ENCODE measurements at regions of chr6 and their contacts with region 1.

Region 1: DNA sequence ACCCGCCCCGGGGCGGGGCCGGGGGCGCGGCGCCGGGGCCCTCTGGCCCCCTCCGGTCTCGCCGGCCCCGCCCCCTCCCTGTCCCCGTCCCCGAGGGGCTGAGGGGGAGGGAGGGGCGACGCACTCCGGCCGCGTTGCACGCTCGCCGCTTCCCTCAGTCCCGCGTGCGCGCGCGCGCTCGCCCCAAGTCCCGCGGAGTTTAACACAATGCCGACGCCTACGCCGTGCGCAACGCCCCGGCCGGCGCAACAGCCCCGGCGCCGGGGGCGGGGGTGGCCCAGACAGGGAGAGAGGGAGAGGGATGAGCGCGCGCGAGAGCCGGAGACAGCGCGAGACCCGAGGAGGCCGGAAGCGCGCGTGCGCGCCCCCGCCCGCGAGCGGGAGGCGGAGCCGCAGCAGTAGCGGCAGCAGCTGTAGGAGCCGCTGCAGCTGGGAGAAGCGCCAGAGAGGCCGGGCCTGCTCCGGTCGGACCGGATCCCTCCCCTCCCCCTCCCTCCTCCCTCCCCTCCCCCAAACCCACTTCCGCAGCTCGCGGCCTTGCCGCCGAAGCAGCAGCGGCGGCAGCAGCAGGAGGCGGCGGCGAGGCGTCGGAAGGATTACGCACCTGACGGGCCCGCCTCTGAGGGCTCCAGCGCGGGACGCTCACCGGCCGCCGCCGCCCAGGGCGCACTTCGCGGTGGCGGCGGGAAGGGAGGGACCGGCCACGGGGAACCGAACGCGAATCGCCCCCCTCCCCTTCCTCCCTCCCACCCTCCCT is 905 bp downstream of the ZBTB2 start:
- DNase-seq: peak; percentile 99
- H3K4me3 Mint-ChIP-seq: peak overlapping the region; percentile 88
- H3K27ac Mint-ChIP-seq: peak overlapping the region; percentile 74
- H3K4me1 Mint-ChIP-seq: peaks cover 25% of the 10 kb centered on the region
- H3K27me3 Mint-ChIP-seq: no peaks in the 10 kb centered on the region
- CTCF ChIP-seq: no peak

Region 2: GRCh38 chr6:151357758-151358436 is 32.6 kb before region 1 on chr6:
- CTCF ChIA-PET with region 1: no interaction called
- POLR2A ChIA-PET with region 1: interaction called, 10 read pairs
- intact Hi-C with region 1: no loop called
- DNase-seq: peak; percentile 30
- H3K4me3 Mint-ChIP-seq: no peak overlapping the region
- H3K27ac Mint-ChIP-seq: no peak overlapping the region
- H3K4me1 Mint-ChIP-seq: peaks cover 10% of the 10 kb centered on the region
- H3K27me3 Mint-ChIP-seq: no peaks in the 10 kb centered on the region
- CTCF ChIP-seq: no peak

Region 3: GRCh38 chr6:151374036-151374683 is 16.3 kb before region 1 on chr6:
- CTCF ChIA-PET with region 1: interaction called, 5 read pairs
- POLR2A ChIA-PET with region 1: interaction called, 70 read pairs
- intact Hi-C with region 1: no loop called
- DNase-seq: no peak
- H3K4me3 Mint-ChIP-seq: peak overlapping the region; percentile 34
- H3K27ac Mint-ChIP-seq: peak overlapping the region; percentile 92
- H3K4me1 Mint-ChIP-seq: peaks cover 9% of the 10 kb centered on the region
- H3K27me3 Mint-ChIP-seq: no peaks in the 10 kb centered on the region
- CTCF ChIP-seq: no peak

Region 4: DNA sequence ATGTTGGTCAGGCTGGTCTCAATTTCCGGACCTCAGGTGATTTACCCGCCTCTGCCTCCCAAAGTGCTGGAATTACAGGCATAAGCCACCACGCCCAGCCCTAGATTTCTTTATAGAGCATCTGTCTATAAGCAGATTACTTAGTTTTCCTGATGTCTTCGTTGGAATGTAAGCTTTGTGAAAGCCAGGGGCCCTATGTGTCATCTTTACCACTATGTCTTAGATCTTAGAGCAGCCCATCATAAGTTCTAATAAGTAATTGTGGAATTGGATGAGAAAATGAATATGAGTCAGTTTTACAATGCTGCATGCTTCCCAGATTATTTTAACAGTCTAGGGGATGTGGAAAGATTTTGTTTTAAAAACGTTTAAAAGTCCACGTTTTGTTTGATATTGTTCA is 10.0 kb after region 1 on chr6:
- CTCF ChIA-PET with region 1: interaction called, 40 read pairs
- POLR2A ChIA-PET with region 1: interaction called, 16 read pairs
- intact Hi-C with region 1: no loop called
- DNase-seq: no peak
- H3K4me3 Mint-ChIP-seq: no peak overlapping the region
- H3K27ac Mint-ChIP-seq: no peak overlapping the region
- H3K4me1 Mint-ChIP-seq: peaks cover 12% of the 10 kb centered on the region
- H3K27me3 Mint-ChIP-seq: no peaks in the 10 kb centered on the region
- CTCF ChIP-seq: no peak

Region 5: GRCh38 chr6:151451950-151452749 is 61.7 kb after region 1 on chr6 and contains the start of gene RMND1:
- CTCF ChIA-PET with region 1: interaction called, 4 read pairs
- POLR2A ChIA-PET with region 1: interaction called, 43 read pairs
- intact Hi-C with region 1: loop called (anchors 2 kb)
- DNase-seq: peak; percentile 100
- H3K4me3 Mint-ChIP-seq: peak within 1 kb of the TSS; percentile 99
- H3K27ac Mint-ChIP-seq: peak within 1 kb of the TSS; percentile 87
- H3K4me1 Mint-ChIP-seq: peaks cover 36% of the 10 kb centered on the region
- H3K27me3 Mint-ChIP-seq: no peaks in the 10 kb centered on the region
- CTCF ChIP-seq: no peak
- total RNA-seq, gene RMND1: 32.9 and 37.6 TPM in 2 replicates

Measured in MCF 10A (cell line).